ENCODE measurements at regions of chr1 and their contacts with region 1.

Region 1: DNA sequence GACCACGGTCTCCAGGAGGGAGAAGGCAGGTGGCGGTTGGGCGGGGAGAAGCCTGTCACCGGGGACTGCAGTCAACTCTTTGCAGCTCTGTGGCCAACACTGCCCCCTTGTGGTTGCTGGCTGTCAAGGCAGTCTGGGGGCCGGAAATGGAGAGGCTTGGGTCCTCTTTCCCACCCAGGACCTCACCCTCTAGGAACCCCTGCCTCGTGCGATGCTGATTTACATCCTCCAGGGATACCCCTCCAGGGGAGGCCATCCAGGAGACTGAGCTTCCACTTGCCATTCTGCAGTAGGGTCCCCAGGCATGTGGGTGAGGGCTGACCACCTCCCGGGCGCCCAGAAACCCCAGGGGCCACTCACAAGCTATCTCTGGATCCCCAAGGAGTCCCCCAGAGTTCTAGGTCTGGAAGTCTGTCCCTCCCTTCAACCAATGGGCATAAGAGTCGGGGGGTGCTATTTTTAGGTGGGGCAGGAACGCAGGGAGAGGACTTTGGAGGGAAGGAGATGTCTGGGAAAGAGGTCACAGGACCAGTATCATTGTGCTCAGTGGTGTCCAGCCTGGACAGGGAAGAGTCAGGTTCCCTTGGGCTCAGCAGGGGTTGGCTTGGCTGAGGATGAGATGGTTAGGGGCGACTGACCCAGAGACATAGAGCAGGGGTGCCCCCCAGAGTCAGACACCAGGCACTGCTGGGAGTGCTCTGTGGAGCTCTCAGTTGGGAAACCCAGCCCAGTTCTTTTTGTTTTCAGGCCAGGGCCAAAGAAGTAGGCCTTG is 7.1 kb upstream of the GPR61 start:
- DNase-seq: peak; percentile 67
- H3K4me3 ChIP-seq: no peak overlapping the region
- H3K27ac ChIP-seq: no peak overlapping the region
- H3K4me1 ChIP-seq: peaks cover 4% of the 10 kb centered on the region
- H3K27me3 ChIP-seq: peaks cover under 1 to 4% of the 10 kb centered on the region in 2 experiments
- CTCF ChIP-seq: peak; percentile 86 to 97
- POLR2A ChIP-seq: no peak

Region 2: DNA sequence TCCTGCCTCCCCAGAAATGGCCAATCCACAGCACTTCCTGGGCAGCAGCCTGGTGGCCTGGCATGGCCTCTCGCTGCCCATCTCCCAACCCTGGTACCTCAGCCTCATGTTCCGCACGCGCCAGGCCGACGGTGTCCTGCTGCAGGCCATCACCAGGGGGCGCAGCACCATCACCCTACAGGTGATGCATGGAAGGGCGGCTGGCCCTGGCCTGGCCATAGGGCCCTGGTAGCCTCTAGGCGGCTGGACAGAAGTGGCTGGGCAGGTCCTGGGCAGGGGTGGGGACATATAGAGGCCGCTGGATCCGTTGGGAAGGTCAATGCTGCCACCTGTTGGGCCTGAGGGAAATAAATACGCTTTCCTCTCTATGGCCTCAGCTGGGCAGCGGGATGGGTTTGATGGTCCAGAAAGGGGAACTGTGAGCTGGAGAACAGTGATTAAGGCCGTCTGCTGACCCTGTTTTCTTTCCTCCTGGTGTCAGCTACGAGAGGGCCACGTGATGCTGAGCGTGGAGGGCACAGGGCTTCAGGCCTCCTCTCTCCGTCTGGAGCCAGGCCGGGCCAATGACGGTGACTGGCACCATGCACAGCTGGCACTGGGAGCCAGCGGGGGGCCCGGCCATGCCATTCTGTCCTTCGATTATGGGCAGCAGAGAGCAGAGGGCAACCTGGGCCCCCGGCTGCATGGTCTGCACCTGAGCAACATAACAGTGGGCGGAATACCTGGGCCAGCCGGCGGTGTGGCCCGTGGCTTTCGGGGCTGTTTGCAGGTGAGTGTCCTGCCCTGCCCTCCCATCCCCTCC is 268.8 kb before region 1 on chr1:
- CTCF ChIA-PET with region 1: interaction called, 34 read pairs
- POLR2A ChIA-PET with region 1: no interaction called
- dilution Hi-C with region 1: no loop called
- intact Hi-C with region 1: no loop called
- DNase-seq: peak; percentile 82
- H3K4me3 ChIP-seq: no peak overlapping the region
- H3K27ac ChIP-seq: no peak overlapping the region
- H3K4me1 ChIP-seq: no peaks in the 10 kb centered on the region
- H3K27me3 ChIP-seq: no peaks in the 10 kb centered on the region
- CTCF ChIP-seq: peak; percentile 100
- POLR2A ChIP-seq: no peak

Region 3: GRCh38 chr1:109397538-109398342 is 134.8 kb before region 1 on chr1 and contains the start of gene SORT1:
- CTCF ChIA-PET with region 1: interaction called, 43 read pairs
- POLR2A ChIA-PET with region 1: no interaction called
- dilution Hi-C with region 1: no loop called
- intact Hi-C with region 1: no loop called
- DNase-seq: peak; percentile 91
- H3K4me3 ChIP-seq: peak within 1 kb of the TSS; percentile 15 to 51 (median 44)
- H3K27ac ChIP-seq: no peak within 1 kb of the TSS
- H3K4me1 ChIP-seq: peaks cover 15% of the 10 kb centered on the region
- H3K27me3 ChIP-seq: peaks cover 13 to 19% of the 10 kb centered on the region in 2 experiments
- CTCF ChIP-seq: no peak
- POLR2A ChIP-seq: no peak
- total RNA-seq, gene SORT1: 16.8 and 17.8 TPM in 2 replicates

Region 4: GRCh38 chr1:109483672-109484518 is 48.7 kb before region 1 on chr1 and contains the start of gene ATXN7L2:
- CTCF ChIA-PET with region 1: interaction called, 955 read pairs
- POLR2A ChIA-PET with region 1: no interaction called
- dilution Hi-C with region 1: no loop called
- intact Hi-C with region 1: no loop called
- DNase-seq: peak; percentile 92
- H3K4me3 ChIP-seq: peak within 1 kb of the TSS; percentile 66 to 76 (median 69)
- H3K27ac ChIP-seq: peak within 1 kb of the TSS; percentile 83
- H3K4me1 ChIP-seq: peaks cover 14% of the 10 kb centered on the region
- H3K27me3 ChIP-seq: peaks cover 18 to 21% of the 10 kb centered on the region in 2 experiments
- CTCF ChIP-seq: no peak
- POLR2A ChIP-seq: peak; percentile 94
- total RNA-seq, gene ATXN7L2: 3.8 and 4.4 TPM in 2 replicates

Region 5: GRCh38 chr1:109499661-109500536 is 32.7 kb before region 1 on chr1:
- CTCF ChIA-PET with region 1: interaction called, 955 read pairs
- POLR2A ChIA-PET with region 1: no interaction called
- dilution Hi-C with region 1: no loop called
- intact Hi-C with region 1: loop called (anchors 1 kb)
- DNase-seq: peak; percentile 28
- H3K4me3 ChIP-seq: no peak overlapping the region
- H3K27ac ChIP-seq: no peak overlapping the region
- H3K4me1 ChIP-seq: peaks cover 7% of the 10 kb centered on the region
- H3K27me3 ChIP-seq: no peaks in the 10 kb centered on the region
- CTCF ChIP-seq: peak; percentile 51 to 60
- POLR2A ChIP-seq: no peak

Region 6: DNA sequence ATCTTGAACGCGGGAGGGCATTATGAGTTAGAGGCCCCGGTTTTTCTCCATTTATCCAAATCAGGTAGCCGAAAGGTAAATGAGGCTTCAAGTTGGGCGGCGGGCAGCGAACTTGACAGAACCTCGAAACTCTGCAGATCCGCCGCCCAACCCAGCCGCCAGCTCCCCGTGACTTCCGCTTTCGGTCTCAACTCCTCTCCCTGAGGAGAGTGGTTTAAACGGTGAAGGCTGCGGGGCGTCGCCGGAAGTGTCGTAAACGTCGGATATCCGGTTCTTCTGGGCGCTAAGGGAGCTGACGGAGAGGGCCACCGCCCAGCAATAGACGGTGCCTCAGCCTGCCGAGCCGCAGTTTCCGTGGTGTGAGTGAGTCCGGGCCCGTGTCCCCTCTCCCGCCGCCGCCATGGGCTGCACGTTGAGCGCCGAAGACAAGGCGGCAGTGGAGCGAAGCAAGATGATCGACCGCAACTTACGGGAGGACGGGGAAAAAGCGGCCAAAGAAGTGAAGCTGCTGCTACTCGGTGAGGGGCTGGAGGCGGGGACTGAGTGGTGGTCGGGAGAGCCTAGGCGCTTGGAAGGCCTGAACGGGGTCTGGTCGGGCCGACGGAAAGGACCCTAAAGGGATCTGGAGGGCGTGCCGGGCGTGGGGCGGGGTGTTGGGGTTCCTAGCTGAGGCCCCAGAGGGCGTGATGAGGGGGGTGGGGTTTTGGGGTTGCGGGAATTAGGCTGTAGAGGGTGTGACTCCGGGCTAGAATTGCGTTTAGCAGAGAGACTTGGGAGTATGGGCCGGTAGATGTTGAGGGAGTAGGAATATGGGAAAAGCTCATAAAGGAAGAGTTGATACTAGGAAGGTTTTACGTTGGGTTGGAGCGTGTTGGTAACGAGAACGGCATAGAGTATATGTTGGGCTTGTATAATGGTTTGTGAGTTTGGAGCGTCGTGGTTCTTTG is 16.0 kb after region 1 on chr1 and contains the start of gene GNAI3:
- CTCF ChIA-PET with region 1: interaction called, 26 read pairs
- POLR2A ChIA-PET with region 1: interaction called, 3 read pairs
- dilution Hi-C with region 1: no loop called
- intact Hi-C with region 1: no loop called
- DNase-seq: peak; percentile 96
- H3K4me3 ChIP-seq: peak within 1 kb of the TSS; percentile 75 to 98 (median 96)
- H3K27ac ChIP-seq: peak within 1 kb of the TSS; percentile 87
- H3K4me1 ChIP-seq: peaks cover 29% of the 10 kb centered on the region
- H3K27me3 ChIP-seq: peaks cover 0 to 2% of the 10 kb centered on the region in 2 experiments
- CTCF ChIP-seq: no peak
- POLR2A ChIP-seq: peak; percentile 89
- total RNA-seq, gene GNAI3: 12.9 and 14.0 TPM in 2 replicates

Measured in endothelial cell of umbilical vein (primary cell).